ENCODE measurements at regions of chr3 and their contacts with region 1.

Region 1: DNA sequence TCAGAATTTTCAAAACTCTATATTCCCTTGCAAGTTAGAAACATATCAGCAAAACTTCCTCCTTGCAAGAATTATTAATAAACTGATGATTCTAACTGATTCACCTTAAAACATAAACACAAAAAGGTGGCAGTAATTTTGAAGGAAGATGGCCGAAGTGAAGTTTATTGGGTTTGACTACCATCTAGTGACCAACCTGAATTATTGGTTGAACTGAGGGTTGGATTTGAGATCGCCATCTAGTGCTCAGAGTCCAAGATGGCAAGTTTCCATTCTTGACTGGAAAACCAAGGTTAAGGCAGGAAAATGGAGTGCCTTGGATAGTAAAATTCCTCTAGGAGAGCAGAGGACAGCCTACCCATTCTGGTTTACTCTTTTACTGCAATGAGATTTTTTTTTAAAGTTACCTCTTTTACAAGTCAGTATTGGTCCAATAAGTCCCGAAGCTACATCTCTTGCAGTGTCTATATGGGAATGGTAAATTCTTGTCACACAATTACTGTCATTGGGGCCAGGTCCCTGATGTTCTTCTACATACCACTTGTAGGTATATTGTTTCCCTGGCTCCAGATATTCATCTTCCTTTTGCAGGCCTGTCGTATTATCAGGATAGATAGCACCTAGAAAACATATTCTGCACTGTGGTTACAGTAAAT is 51.6 kb upstream of the CP start:
- DNase-seq: peak in 3 of 9 experiments; percentile 22 to 85 (median 76)
- ATAC-seq: peak; percentile 86
- H3K4me3 ChIP-seq: no peak overlapping the region
- H3K4me3 Mint-ChIP-seq: no peak overlapping the region
- H3K27ac ChIP-seq: no peak overlapping the region
- H3K27ac Mint-ChIP-seq: no peak overlapping the region
- H3K4me1 ChIP-seq: peaks cover 13% of the 10 kb centered on the region
- H3K4me1 Mint-ChIP-seq: peaks cover 12% of the 10 kb centered on the region
- H3K27me3 ChIP-seq: no peaks in the 10 kb centered on the region
- H3K27me3 Mint-ChIP-seq: no peaks in the 10 kb centered on the region
- CTCF ChIP-seq: peak; percentile 89

Region 2: GRCh38 chr3:148861277-148861869 is 411.9 kb before region 1 on chr3:
- CTCF ChIA-PET with region 1: no interaction called
- POLR2A ChIA-PET with region 1: no interaction called
- intact Hi-C with region 1: loop called (anchors 1 kb)
- DNase-seq: peak in 2 of 9 experiments; percentile 45 to 54
- ATAC-seq: peak; percentile 48
- H3K4me3 ChIP-seq: no peak overlapping the region
- H3K4me3 Mint-ChIP-seq: no peak overlapping the region
- H3K27ac ChIP-seq: no peak overlapping the region
- H3K27ac Mint-ChIP-seq: no peak overlapping the region
- H3K4me1 ChIP-seq: no peaks in the 10 kb centered on the region
- H3K4me1 Mint-ChIP-seq: no peaks in the 10 kb centered on the region
- H3K27me3 ChIP-seq: peaks cover 0 to 2% of the 10 kb centered on the region in 2 experiments
- H3K27me3 Mint-ChIP-seq: peaks cover 10% of the 10 kb centered on the region
- CTCF ChIP-seq: peak; percentile 78

Region 3: GRCh38 chr3:148955544-148956346 is 317.5 kb before region 1 on chr3:
- CTCF ChIA-PET with region 1: interaction called, 17 read pairs
- POLR2A ChIA-PET with region 1: interaction called, 3 read pairs
- intact Hi-C with region 1: loop called (anchors 1 to 2 kb)
- DNase-seq: peak in 2 of 9 experiments; percentile 62 to 66
- ATAC-seq: no peak
- H3K4me3 ChIP-seq: no peak overlapping the region
- H3K4me3 Mint-ChIP-seq: no peak overlapping the region
- H3K27ac ChIP-seq: no peak overlapping the region
- H3K27ac Mint-ChIP-seq: no peak overlapping the region
- H3K4me1 ChIP-seq: no peaks in the 10 kb centered on the region
- H3K4me1 Mint-ChIP-seq: no peaks in the 10 kb centered on the region
- H3K27me3 ChIP-seq: no peaks in the 10 kb centered on the region
- H3K27me3 Mint-ChIP-seq: peaks cover 2% of the 10 kb centered on the region
- CTCF ChIP-seq: peak; percentile 48

Region 4: GRCh38 chr3:149199474-149199873 is 73.8 kb before region 1 on chr3:
- CTCF ChIA-PET with region 1: no interaction called
- POLR2A ChIA-PET with region 1: no interaction called
- intact Hi-C with region 1: loop called in 1 of 2 experiments (anchors 5 kb)
- DNase-seq: no peak
- ATAC-seq: no peak
- H3K4me3 ChIP-seq: no peak overlapping the region
- H3K4me3 Mint-ChIP-seq: no peak overlapping the region
- H3K27ac ChIP-seq: no peak overlapping the region
- H3K27ac Mint-ChIP-seq: no peak overlapping the region
- H3K4me1 ChIP-seq: no peaks in the 10 kb centered on the region
- H3K4me1 Mint-ChIP-seq: no peaks in the 10 kb centered on the region
- H3K27me3 ChIP-seq: no peaks in the 10 kb centered on the region
- H3K27me3 Mint-ChIP-seq: peaks cover 5% of the 10 kb centered on the region
- CTCF ChIP-seq: no peak

Measured in CD8-positive, alpha-beta T cell (primary cell).